Dorsolateral prefrontal cortex (tissue), 120 donors: ENCODE measurements at regions of chr1 and their contacts with region 1.

Region 1: DNA sequence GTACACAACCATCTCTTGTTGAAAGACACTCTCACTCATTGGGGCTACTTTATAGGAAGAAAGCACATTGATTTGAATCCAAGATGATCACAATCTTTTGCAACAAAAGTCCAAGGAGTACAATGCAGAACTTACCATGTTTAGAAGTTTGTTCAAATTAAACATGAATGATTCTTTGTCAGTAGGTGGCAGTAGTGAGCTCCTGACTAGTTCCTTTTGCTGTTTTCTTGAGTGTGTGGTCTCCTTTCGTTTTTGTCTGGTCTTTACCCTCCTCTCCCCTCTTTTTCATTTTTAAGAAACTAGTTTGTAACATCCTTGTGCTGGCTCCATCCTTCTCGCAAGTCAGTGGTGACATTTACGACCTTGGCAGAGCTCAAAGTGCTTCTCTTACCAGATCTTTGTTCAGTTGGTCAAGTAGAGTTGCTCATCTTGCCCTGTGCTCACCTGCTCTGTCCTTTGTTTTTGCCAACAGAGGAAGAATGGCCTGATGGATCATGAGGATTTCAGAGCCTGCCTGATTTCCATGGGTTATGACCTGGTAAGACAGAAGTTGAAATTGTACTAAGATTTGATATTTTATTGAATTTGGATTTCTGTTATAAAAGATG is 35.7 kb upstream of the MTR start:
- DNase-seq: no peak
- H3K4me3 ChIP-seq: no peak overlapping the region
- H3K27ac ChIP-seq: no peak overlapping the region
- H3K27me3 ChIP-seq: no peaks in the 10 kb centered on the region
- CTCF ChIP-seq: peak; percentile 50 to 80 (median 69)

Region 2: GRCh38 chr1:236997882-236998281 is 238.5 kb after region 1 on chr1:
- intact Hi-C with region 1: no loop called
- DNase-seq: peak in 1 of 10 donors; percentile 47
- H3K4me3 ChIP-seq: no peak overlapping the region
- H3K27ac ChIP-seq: no peak overlapping the region
- H3K27me3 ChIP-seq: peaks cover 0 to 3% (median 0%) of the 10 kb centered on the region in 45 donors
- CTCF ChIP-seq: no peak

Region 3: GRCh38 chr1:237386362-237387143 is 627.2 kb after region 1 on chr1:
- intact Hi-C with region 1: loop called in 1 of 2 experiments (anchors 10 kb)
- DNase-seq: no peak
- H3K4me3 ChIP-seq: no peak overlapping the region
- H3K27ac ChIP-seq: no peak overlapping the region
- H3K27me3 ChIP-seq: no peaks in the 10 kb centered on the region
- CTCF ChIP-seq: peak in 55 of 56 donors; percentile 11 to 86 (median 67)

Region 4: DNA sequence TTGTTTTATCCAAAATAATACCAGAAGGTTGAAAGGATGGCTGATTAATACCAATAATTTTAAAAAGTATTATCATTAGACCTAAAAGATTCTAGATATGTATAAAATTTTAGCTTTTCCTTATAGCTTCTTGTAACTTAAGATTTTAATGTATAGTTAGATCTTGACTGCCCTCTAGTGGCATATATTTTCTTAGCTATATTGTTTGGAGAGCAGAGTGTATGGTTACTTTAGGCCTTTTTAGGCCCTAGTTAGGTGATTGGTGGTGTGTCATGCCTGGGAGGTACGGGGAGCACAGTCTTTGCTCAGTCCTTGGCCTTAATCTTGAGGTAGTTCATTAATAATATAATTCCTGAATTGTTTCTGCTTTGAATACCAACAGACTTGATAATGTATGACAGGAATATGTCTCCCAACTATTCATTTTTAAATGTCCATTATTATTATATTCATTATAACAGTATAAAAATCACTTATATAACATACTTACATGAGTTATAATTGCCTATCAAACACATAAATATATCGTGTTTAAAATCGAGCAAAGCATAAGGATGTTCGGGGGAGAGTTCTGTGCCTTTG is 803.0 kb after region 1 on chr1:
- intact Hi-C with region 1: loop called in 1 of 2 experiments (anchors 10 kb)
- DNase-seq: no peak
- H3K4me3 ChIP-seq: no peak overlapping the region
- H3K27ac ChIP-seq: no peak overlapping the region
- H3K27me3 ChIP-seq: no peaks in the 10 kb centered on the region
- CTCF ChIP-seq: peak; percentile 50 to 82 (median 73)